ENCODE measurements at regions of chr5 and their contacts with region 1.

Region 1: GRCh38 chr5:118580949-118581348 is 407.4 kb downstream of the DTWD2 start:
- DNase-seq: no peak
- H3K27ac ChIP-seq: no peak overlapping the region
- CTCF ChIP-seq: no peak

Region 2: DNA sequence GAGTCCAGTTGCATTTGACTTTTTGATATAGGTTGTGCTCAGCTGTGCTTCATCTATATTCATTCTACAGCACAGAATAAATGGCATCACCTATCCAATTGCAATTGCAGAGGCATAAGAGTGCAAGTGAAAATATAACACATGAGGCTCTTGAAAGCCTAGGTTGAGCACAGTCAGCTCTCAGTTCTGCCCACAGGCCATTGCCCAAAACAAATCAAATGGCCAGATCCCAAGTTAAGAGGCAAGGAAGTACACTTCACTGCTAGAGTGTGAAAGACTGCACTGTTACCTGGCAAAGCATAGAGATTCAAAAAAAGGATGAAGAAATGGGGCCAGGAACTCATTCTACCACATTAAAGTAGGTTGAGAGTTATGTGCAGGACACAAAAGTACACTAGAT is 1700.8 kb before region 1 on chr5:
- CTCF ChIA-PET with region 1: no interaction called
- POLR2A ChIA-PET with region 1: interaction called, 10 read pairs
- DNase-seq: no peak
- H3K27ac ChIP-seq: no peak overlapping the region
- CTCF ChIP-seq: no peak

Region 3: GRCh38 chr5:119229950-119230349 is 649.0 kb after region 1 on chr5:
- CTCF ChIA-PET with region 1: no interaction called
- POLR2A ChIA-PET with region 1: no interaction called
- DNase-seq: no peak
- H3K27ac ChIP-seq: no peak overlapping the region
- CTCF ChIP-seq: no peak

Measured in RWPE1 (cell line).